OCI-LY7 (cell line): ENCODE measurements at regions of chr17 and their contacts with region 1.

Region 1: GRCh38 chr17:74566132-74566753 is 1.1 kb downstream of the CD300H start:
- DNase-seq: peak; percentile 63
- H3K4me3 ChIP-seq: no peak overlapping the region
- H3K27ac ChIP-seq: no peak overlapping the region
- H3K4me1 ChIP-seq: no peaks in the 10 kb centered on the region
- CTCF ChIP-seq: peak; percentile 95

Region 2: GRCh38 chr17:74646231-74646630 is 80.0 kb after region 1 on chr17:
- CTCF ChIA-PET with region 1: no interaction called
- POLR2A ChIA-PET with region 1: no interaction called
- intact Hi-C with region 1: loop called (anchors 1 kb)
- DNase-seq: peak; percentile 61
- H3K4me3 ChIP-seq: no peak overlapping the region
- H3K27ac ChIP-seq: no peak overlapping the region
- H3K4me1 ChIP-seq: no peaks in the 10 kb centered on the region
- CTCF ChIP-seq: peak; percentile 83